Activated naive CD4-positive, alpha-beta T cell treated with anti-CD3 and anti-CD28 coated beads, Interleukin-2, amount 10 ng/mL, durations not matched to agents 7 days and 5 days (primary cell): ENCODE measurements at regions of chr15 and their contacts with region 1.

Region 1: GRCh38 chr15:86624261-86625036 is 544.8 kb downstream of the AGBL1 start:
- DNase-seq: peak; percentile 59
- H3K4me3 Mint-ChIP-seq: no peak overlapping the region
- H3K27ac Mint-ChIP-seq: no peak overlapping the region
- H3K4me1 Mint-ChIP-seq: peaks cover 16% of the 10 kb centered on the region
- H3K27me3 Mint-ChIP-seq: peaks cover 9% of the 10 kb centered on the region

Region 2: GRCh38 chr15:86526938-86527690 is 97.3 kb before region 1 on chr15:
- CTCF ChIA-PET with region 1: no interaction called
- DNase-seq: no peak
- H3K4me3 Mint-ChIP-seq: no peak overlapping the region
- H3K27ac Mint-ChIP-seq: no peak overlapping the region
- H3K4me1 Mint-ChIP-seq: no peaks in the 10 kb centered on the region
- H3K27me3 Mint-ChIP-seq: no peaks in the 10 kb centered on the region

Region 3: GRCh38 chr15:86653344-86654197 is 29.1 kb after region 1 on chr15:
- CTCF ChIA-PET with region 1: interaction called, 10 read pairs
- DNase-seq: no peak
- H3K4me3 Mint-ChIP-seq: peak overlapping the region; percentile 7
- H3K27ac Mint-ChIP-seq: peak overlapping the region; percentile 80
- H3K4me1 Mint-ChIP-seq: peaks cover 52% of the 10 kb centered on the region
- H3K27me3 Mint-ChIP-seq: no peaks in the 10 kb centered on the region

Region 4: DNA sequence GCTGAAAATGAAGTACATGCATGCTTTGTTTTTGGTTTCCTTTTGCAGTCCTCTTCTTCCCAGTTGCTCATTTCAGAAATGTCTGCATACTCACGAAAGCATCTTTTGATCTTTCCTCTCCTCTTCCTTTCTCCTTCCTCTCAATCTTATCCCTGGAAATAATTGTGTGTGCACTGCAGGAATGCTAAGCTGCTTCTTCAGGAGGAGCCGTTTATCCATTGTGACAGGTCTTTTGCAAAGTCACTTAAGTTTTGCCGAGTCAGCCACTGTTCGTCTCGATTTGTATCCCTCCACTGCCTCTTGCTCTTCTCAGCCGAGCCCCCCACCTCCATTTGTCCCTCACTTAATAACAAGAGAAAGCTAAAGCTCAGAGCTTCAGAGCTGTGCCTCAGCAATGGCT is 52.8 kb after region 1 on chr15:
- CTCF ChIA-PET with region 1: no interaction called
- DNase-seq: no peak
- H3K4me3 Mint-ChIP-seq: no peak overlapping the region
- H3K27ac Mint-ChIP-seq: peak overlapping the region; percentile 2
- H3K4me1 Mint-ChIP-seq: no peaks in the 10 kb centered on the region
- H3K27me3 Mint-ChIP-seq: no peaks in the 10 kb centered on the region

Region 5: DNA sequence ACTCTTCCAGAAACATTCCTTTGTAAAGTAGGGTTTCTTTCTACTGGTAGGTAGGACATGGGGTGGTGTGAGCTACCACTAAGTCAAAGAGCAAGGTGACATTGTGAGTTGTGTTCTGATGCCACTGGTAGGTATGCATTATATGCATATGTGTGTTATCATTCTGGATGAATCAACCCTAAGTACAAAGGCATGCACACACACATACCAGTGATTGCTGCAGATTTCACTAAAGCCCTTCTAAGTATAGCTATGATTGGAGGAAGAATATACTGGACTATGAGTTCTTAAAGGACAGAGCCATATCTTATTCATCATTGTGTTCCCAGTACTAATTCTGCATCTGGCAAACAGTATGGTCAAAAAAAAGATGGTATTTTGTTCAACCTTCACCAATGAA is 101.2 kb after region 1 on chr15:
- CTCF ChIA-PET with region 1: no interaction called
- DNase-seq: no peak
- H3K4me3 Mint-ChIP-seq: no peak overlapping the region
- H3K27ac Mint-ChIP-seq: no peak overlapping the region
- H3K4me1 Mint-ChIP-seq: no peaks in the 10 kb centered on the region
- H3K27me3 Mint-ChIP-seq: no peaks in the 10 kb centered on the region